HCT116 (cell line): ENCODE measurements at regions of chr22 and their contacts with region 1.

Region 1: GRCh38 chr22:37330200-37331033 is 48.1 kb downstream of the CYTH4 start:
- DNase-seq: peak; percentile 96
- ATAC-seq: peak; percentile 60
- H3K4me3 ChIP-seq: peak overlapping the region; percentile 17 to 29
- H3K27ac ChIP-seq: peak overlapping the region; percentile 100
- H3K4me1 ChIP-seq: peaks cover 81 to 96% of the 10 kb centered on the region in 2 experiments
- H3K27me3 ChIP-seq: no peaks in the 10 kb centered on the region
- CTCF ChIP-seq: peak in 2 of 3 experiments; percentile 55 to 62; a peak in 4 of 6 replicates
- POLR2A ChIP-seq: no peak
- RAD21 ChIP-seq: no peak

Region 2: DNA sequence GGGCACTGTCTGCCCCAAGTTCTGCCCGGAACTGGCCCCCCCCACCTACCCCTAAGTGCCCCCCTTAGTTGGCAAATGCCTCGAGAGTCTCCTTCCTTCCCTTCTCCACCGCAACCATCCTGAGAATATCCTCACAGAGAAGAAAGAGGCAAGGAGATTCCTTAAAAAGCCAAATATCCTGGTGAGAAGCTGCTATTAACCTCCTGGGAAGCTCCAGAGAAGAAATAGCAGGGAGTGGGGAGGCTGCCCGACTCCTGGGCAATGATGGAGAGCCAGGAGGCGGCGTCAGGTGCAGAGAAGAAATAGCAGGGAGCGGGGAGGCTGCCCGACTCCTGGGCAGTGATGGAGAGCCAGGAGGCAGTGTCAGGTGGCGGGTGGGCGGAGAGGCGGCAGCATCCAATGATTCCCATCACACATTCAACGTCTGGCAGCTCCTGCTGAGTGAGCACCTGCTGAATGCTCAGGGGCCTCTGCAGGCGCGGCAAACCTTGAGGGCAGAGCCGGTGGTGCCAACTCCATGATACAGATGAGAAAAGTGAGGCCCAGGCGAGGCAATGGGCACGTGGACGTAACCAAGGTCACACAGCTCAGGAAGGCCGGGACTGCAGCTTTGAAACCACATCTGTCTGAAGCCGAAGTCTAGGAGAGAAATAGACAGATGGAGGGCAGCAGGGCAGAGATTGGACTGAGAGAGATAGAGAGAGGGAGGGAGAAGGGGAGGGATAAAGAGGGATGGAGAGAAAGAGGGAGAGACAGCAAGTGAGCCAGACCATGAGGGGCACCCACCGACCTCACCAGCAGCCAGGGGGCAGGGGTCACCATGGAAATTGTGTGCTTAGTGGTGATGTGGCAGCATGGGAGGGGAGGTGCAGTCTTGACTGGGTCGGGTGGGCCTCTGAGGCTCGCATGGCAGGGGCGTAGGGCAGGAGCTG is 10.2 kb after region 1 on chr22:
- CTCF ChIA-PET with region 1: interaction called, 15 read pairs
- POLR2A ChIA-PET with region 1: interaction called, 10 read pairs
- RAD21 ChIA-PET with region 1: no interaction called
- intact Hi-C with region 1: no loop called
- DNase-seq: no peak
- ATAC-seq: peak; percentile 36
- H3K4me3 ChIP-seq: no peak overlapping the region
- H3K27ac ChIP-seq: no peak overlapping the region; the same call in 1 of the 2 replicates
- H3K4me1 ChIP-seq: peaks cover 51 to 64% of the 10 kb centered on the region in 2 experiments
- H3K27me3 ChIP-seq: no peaks in the 10 kb centered on the region
- CTCF ChIP-seq: no peak
- POLR2A ChIP-seq: no peak
- RAD21 ChIP-seq: no peak

Region 3: GRCh38 chr22:37428649-37429586 is 98.5 kb after region 1 on chr22:
- CTCF ChIA-PET with region 1: interaction called, 15 read pairs
- POLR2A ChIA-PET with region 1: interaction called, 9 read pairs
- RAD21 ChIA-PET with region 1: interaction called, 4 to 7 read pairs
- intact Hi-C with region 1: no loop called
- DNase-seq: peak; percentile 37
- ATAC-seq: peak; percentile 31
- H3K4me3 ChIP-seq: peak overlapping the region; percentile 70 to 87; a peak in 3 of 4 replicates
- H3K27ac ChIP-seq: peak overlapping the region; percentile 95
- H3K4me1 ChIP-seq: peaks cover 54 to 91% of the 10 kb centered on the region in 2 experiments
- H3K27me3 ChIP-seq: no peaks in the 10 kb centered on the region
- CTCF ChIP-seq: peak in 2 of 3 experiments; percentile 82 to 88; a peak in 4 of 6 replicates
- POLR2A ChIP-seq: no peak
- RAD21 ChIP-seq: no peak